Mammary epithelial cell (primary cell): ENCODE measurements at regions of chr9 and their contacts with region 1.

Region 1: GRCh38 chr9:12719431-12719830 is 26.2 kb downstream of the TYRP1 start:
- DNase-seq: no peak
- H3K4me3 ChIP-seq: no peak overlapping the region
- H3K27ac ChIP-seq: no peak overlapping the region
- H3K4me1 ChIP-seq: no peaks in the 10 kb centered on the region
- H3K27me3 ChIP-seq: no peaks in the 10 kb centered on the region
- CTCF ChIP-seq: peak; percentile 53 to 60

Region 2: DNA sequence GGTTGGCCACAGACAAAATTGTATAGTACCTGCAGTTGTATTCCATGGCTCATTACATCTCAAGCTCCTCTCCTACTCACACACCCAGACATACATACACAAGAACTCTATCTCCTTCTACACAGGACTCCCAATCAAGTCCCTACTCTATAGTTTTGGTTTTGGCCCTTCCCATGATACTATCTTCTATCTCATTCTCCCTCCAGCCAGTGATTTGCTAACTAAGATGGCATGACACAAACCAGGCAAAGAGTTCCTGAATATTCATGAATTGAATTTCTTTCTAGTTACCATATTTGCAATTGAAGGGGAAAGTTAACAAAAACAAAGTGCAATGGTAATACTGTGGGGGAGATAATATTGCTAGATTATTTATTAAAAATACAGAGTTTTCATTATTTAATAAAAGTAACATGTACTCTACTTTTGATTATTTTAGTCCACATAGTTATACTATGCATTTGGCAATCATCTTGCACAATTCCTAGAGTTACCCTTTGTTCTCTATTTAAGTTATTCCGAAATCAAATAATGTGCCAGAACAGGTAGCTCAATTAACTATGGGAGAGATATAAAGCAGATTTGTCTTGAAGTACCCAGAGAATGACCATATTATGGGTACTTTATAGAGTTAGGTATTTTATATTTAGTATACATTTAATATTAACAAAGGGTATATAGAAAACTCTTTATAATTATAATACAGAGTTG is 45.8 kb after region 1 on chr9:
- CTCF ChIA-PET with region 1: no interaction called
- dilution Hi-C with region 1: no loop called
- in situ Hi-C with region 1: no loop called
- intact Hi-C with region 1: no loop called
- DNase-seq: peak; percentile 24
- H3K4me3 ChIP-seq: no peak overlapping the region
- H3K27ac ChIP-seq: no peak overlapping the region
- H3K4me1 ChIP-seq: no peaks in the 10 kb centered on the region
- H3K27me3 ChIP-seq: no peaks in the 10 kb centered on the region
- CTCF ChIP-seq: no peak

Region 3: DNA sequence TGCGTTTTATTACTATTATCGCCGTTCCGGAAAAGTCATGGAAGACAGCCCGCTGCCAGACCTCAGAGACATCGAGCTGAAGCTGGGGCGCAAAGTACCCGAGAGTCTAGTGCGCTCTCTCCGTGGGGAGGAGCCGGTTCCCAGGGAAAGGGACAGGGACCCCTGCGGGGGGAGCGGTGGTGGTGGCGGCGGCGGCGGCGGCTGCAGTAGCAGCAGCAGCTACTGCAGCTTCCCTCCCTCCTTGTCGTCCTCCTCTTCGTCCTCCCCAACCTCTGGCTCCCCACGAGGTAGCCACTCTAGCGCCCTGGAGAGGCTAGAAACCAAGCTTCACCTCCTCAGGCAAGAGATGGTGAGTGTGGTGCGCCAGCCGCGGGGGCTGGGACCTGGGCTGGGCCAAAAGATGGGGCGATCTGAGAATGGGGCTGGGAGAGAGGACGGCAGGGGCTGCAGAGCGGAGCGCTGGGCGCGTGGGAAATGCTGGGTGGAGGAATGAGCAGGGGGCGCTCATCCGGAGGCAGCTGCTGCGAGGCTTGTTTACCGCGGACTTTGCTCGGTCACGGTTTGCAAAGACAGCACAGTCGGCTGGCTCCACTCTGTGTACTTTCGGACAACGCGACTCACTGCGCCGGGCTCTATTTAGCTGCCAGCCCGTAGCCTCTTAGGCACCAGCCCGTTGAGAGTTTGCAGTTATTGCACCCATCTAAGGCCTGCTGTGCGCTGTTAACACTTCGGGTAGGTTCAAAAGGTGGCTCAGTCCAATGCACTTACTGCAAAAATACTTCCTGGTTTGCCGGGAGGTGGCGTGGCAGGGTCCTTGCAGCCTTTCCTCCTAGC is 56.5 kb after region 1 on chr9:
- CTCF ChIA-PET with region 1: no interaction called
- dilution Hi-C with region 1: no loop called
- in situ Hi-C with region 1: no loop called
- intact Hi-C with region 1: loop called (anchors 1 kb)
- DNase-seq: peak; percentile 88
- H3K4me3 ChIP-seq: peak overlapping the region; percentile 74 to 87 (median 84)
- H3K27ac ChIP-seq: peak overlapping the region; percentile 89
- H3K4me1 ChIP-seq: peaks cover 15% of the 10 kb centered on the region
- H3K27me3 ChIP-seq: no peaks in the 10 kb centered on the region
- CTCF ChIP-seq: peak; percentile 32 to 63

Region 4: GRCh38 chr9:12884737-12885414 is 165.4 kb after region 1 on chr9:
- CTCF ChIA-PET with region 1: interaction called, 6 read pairs
- dilution Hi-C with region 1: no loop called
- in situ Hi-C with region 1: loop called (anchors 5 kb)
- intact Hi-C with region 1: loop called (anchors 1 kb)
- DNase-seq: peak; percentile 77
- H3K4me3 ChIP-seq: no peak overlapping the region
- H3K27ac ChIP-seq: no peak overlapping the region
- H3K4me1 ChIP-seq: no peaks in the 10 kb centered on the region
- H3K27me3 ChIP-seq: no peaks in the 10 kb centered on the region
- CTCF ChIP-seq: peak; percentile 61 to 71

Region 5: DNA sequence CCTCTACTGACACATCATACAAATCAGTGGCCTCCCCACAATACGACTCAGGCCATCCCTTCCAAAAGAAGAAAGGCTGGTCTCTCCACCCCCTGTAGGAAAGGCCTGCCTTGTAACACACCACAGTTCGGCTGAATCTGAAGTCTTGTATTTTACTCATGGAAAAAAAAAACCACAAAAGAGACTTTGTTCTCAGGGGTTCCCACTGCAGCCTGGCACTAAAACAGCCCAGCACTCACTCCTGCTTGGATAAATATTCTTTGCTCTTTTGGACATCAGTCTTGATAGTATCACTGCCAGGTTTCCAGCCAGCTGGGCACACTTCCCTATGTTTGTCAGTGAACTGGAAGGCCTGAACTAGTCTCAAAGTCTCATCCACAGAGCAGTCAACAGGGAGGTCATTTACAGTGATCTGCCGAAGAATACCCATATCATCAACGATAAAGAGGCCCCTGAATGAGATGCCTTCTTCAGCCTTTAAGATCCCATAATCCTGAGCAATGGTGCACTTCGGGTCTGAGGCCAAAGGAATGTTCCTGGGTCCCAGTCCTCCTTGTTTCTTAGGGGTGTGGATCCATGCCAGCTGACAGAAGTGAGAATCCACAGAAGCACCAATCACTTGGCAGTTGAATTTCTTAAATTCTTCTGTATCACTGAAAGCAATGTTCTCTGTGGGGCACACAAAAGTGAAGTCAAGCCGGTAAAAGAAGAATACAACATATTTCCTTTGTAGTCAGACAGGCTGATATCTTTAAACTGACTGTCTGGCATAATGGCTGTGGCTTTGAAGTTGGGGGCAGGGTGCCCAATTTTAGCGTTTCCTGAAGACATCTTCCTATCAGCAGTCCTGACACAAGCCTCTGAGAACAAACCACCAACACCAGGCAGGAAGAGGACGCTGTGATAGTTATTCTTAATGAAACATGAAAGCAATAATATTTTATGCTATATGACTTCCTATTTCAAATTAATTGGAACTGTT is 253.5 kb after region 1 on chr9:
- CTCF ChIA-PET with region 1: no interaction called
- dilution Hi-C with region 1: no loop called
- in situ Hi-C with region 1: no loop called
- intact Hi-C with region 1: loop called (anchors 5 kb)
- DNase-seq: no peak
- H3K4me3 ChIP-seq: no peak overlapping the region
- H3K27ac ChIP-seq: no peak overlapping the region
- H3K4me1 ChIP-seq: no peaks in the 10 kb centered on the region
- H3K27me3 ChIP-seq: no peaks in the 10 kb centered on the region
- CTCF ChIP-seq: no peak

Region 6: DNA sequence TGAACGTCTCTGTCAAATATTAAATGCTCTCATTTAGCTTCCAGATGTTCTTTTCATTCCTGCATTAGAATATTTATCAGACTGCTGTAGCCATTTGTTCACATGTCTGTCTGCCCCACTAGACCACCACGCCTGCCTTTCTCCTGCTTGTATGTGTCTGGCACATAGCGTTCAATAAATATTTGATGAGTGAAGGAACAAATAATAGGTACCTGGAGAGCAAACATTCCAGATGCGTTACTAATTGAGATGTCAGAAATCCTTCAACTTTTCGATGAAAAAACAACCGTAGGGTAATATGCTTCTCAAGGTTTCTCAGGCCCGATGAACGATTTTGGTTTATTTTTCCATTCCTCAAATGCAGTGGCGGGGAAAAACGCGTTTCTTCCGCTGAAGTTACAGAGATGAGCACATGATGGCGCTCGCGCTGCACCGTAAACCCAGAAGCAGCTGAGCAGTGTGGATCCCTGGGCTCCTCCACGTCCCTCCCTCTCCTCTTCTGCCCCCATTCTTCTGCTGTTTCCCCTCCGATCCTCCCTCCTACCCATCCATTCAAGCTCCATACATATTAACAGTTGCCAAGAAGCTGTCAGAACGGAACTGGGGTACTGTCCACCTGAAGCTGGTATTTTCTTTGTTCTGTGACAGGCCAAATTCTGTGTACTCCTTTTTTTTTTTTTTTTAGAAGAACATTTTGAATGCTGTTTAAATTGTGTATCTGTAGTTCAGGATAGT is 314.7 kb after region 1 on chr9:
- CTCF ChIA-PET with region 1: no interaction called
- dilution Hi-C with region 1: no loop called
- in situ Hi-C with region 1: no loop called
- intact Hi-C with region 1: loop called (anchors 1 kb)
- DNase-seq: peak; percentile 47
- H3K4me3 ChIP-seq: peak overlapping the region in 1 of 3 experiments; percentile 24
- H3K27ac ChIP-seq: no peak overlapping the region
- H3K4me1 ChIP-seq: no peaks in the 10 kb centered on the region
- H3K27me3 ChIP-seq: no peaks in the 10 kb centered on the region
- CTCF ChIP-seq: peak; percentile 83

Region 7: DNA sequence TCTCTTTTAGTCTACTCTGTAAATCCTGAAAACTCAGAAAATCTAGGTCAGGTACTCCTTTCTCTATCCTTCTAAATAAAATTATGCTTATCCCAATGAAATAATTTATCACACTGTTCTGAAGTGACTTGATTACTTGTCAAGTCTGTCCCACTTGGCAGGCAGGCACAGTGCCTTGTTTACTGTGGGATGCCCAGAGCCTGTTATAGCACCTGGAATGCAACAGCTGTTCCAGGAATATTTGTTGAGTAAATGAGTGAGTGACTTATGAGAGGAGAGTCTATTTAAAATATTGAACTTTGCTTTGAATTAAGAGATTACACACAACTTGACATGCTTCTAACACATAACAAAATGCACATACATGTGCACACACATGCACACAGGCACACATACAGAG is 430.0 kb after region 1 on chr9:
- CTCF ChIA-PET with region 1: no interaction called
- dilution Hi-C with region 1: no loop called
- in situ Hi-C with region 1: no loop called
- intact Hi-C with region 1: no loop called
- DNase-seq: no peak
- H3K4me3 ChIP-seq: no peak overlapping the region
- H3K27ac ChIP-seq: no peak overlapping the region
- H3K4me1 ChIP-seq: no peaks in the 10 kb centered on the region
- H3K27me3 ChIP-seq: no peaks in the 10 kb centered on the region
- CTCF ChIP-seq: no peak

Region 8: GRCh38 chr9:13380903-13381302 is 661.5 kb after region 1 on chr9:
- CTCF ChIA-PET with region 1: interaction called, 10 read pairs
- dilution Hi-C with region 1: no loop called
- in situ Hi-C with region 1: no loop called
- intact Hi-C with region 1: no loop called
- DNase-seq: no peak
- H3K4me3 ChIP-seq: no peak overlapping the region
- H3K27ac ChIP-seq: no peak overlapping the region
- H3K4me1 ChIP-seq: no peaks in the 10 kb centered on the region
- H3K27me3 ChIP-seq: no peaks in the 10 kb centered on the region
- CTCF ChIP-seq: no peak